A673 (cell line): ENCODE measurements at regions of chr5 and their contacts with region 1.

Region 1: DNA sequence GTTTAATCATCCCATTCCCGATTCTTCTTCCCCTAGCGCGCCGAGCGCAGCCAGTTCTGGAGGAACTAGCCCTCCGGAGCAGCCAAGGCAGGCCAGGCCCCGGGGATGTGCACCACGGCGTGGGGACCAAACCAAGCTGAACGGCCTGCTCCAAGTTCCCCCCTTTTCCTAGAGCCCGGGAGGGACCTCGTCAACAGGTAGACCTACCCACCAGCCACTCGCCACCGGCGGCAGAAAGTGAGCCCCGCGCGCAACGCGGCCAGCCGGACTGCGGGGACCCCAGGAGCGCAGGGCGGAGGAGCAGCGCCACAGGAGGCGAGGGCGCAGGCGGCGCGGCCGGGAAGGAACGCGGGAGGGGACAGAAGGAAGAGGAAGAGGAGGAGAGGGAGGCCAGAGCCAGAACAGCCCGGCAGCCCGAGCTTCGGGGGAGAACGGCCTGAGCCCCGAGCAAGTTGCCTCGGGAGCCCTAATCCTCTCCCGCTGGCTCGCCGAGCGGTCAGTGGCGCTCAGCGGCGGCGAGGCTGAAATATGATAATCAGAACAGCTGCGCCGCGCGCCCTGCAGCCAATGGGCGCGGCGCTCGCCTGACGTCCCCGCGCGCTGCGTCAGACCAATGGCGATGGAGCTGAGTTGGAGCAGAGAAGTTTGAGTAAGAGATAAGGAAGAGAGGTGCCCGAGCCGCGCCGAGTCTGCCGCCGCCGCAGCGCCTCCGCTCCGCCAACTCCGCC is at the start of gene ISL1:
- DNase-seq: peak; percentile 97
- H3K4me3 ChIP-seq: peak within 1 kb of the TSS; percentile 87
- H3K27ac ChIP-seq: peak within 1 kb of the TSS; percentile 91
- H3K4me1 ChIP-seq: peaks cover 7% of the 10 kb centered on the region
- H3K27me3 ChIP-seq: no peaks in the 10 kb centered on the region
- CTCF ChIP-seq: no peak
- total RNA-seq, gene ISL1: 11.1 and 11.8 TPM in 2 replicates

Region 2: DNA sequence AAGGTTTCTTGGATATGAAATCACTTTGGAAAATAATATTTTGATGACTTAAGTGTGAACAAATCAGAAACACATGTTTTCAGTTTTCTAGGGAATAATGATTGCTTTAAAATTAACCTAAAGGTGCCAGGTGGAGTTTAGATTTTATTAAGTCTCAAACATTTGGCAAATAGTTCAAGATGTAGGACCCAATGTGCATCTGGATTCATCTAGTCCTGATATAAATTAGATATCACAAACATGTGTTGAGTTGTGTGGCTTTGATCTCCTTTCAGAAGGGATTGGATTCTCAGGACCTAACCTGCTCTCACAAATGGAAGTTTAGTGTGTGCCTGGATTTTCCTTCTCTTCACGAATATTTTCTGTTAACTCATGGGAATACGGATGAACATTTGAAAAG is 291.1 kb before region 1 on chr5:
- CTCF ChIA-PET with region 1: no interaction called
- POLR2A ChIA-PET with region 1: no interaction called
- intact Hi-C with region 1: no loop called
- DNase-seq: no peak
- H3K4me3 ChIP-seq: no peak overlapping the region
- H3K27ac ChIP-seq: no peak overlapping the region
- H3K4me1 ChIP-seq: peaks cover 5% of the 10 kb centered on the region
- H3K27me3 ChIP-seq: no peaks in the 10 kb centered on the region
- CTCF ChIP-seq: no peak

Region 3: DNA sequence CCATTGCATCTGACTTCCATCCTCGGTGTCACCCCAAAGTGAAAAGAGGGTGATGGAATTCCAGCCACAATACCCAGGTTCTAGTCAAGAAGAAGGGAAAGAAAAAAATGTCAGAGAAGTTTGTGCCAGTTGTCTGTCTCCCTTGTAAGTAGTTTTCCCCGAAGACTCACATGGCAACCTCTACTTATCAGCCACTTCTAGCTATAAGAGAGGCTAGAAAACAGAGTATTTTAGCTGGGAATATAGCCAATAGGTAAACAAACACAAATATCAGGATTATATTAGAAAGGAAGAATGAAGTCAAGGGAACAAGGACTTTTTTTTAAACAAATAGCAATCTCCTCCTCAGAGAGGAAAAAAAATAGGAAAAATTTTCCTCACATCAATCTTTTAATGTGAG is 11.9 kb before region 1 on chr5:
- CTCF ChIA-PET with region 1: no interaction called
- POLR2A ChIA-PET with region 1: interaction called, 15 read pairs
- intact Hi-C with region 1: no loop called
- DNase-seq: no peak
- H3K4me3 ChIP-seq: no peak overlapping the region
- H3K27ac ChIP-seq: no peak overlapping the region
- H3K4me1 ChIP-seq: peaks cover 8% of the 10 kb centered on the region
- H3K27me3 ChIP-seq: no peaks in the 10 kb centered on the region
- CTCF ChIP-seq: no peak

Region 4: GRCh38 chr5:51960617-51961115 is 577.7 kb after region 1 on chr5:
- CTCF ChIA-PET with region 1: no interaction called
- POLR2A ChIA-PET with region 1: no interaction called
- intact Hi-C with region 1: loop called (anchors 2 kb)
- DNase-seq: peak; percentile 51
- H3K4me3 ChIP-seq: no peak overlapping the region
- H3K27ac ChIP-seq: no peak overlapping the region
- H3K4me1 ChIP-seq: peaks cover 8% of the 10 kb centered on the region
- H3K27me3 ChIP-seq: no peaks in the 10 kb centered on the region
- CTCF ChIP-seq: peak; percentile 67

Region 5: DNA sequence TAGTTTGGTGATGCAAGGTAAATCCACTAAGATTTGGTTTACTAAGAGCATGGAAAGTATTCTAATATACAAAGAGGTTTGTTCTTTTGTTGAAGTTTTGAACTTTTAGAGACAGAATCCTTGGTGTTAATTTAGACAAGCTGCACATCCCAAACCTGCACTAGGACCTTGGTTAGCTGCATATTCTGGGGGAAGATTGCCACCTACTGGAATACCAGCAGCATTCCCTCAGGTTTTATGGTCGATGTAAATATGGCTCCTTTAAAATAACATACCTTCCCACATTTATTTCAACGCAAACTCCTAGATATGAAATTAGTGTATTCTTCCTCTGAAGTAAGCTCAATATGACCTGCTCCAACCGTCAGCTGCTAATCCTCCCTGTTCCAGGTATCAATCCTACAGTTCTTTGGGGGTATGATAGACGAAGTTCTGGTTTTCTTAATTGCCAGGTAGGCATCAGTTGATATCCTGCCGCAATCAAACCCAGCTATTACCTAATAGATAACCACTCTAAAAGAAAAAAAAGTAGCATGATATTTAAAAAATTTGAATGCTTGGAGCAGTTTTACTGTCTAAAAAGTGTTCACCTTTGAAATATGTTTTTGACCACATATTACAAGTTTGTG is 624.4 kb after region 1 on chr5:
- CTCF ChIA-PET with region 1: no interaction called
- POLR2A ChIA-PET with region 1: no interaction called
- intact Hi-C with region 1: loop called (anchors 5 kb)
- DNase-seq: peak; percentile 72
- H3K4me3 ChIP-seq: no peak overlapping the region
- H3K27ac ChIP-seq: no peak overlapping the region
- H3K4me1 ChIP-seq: no peaks in the 10 kb centered on the region
- H3K27me3 ChIP-seq: no peaks in the 10 kb centered on the region
- CTCF ChIP-seq: peak; percentile 84

Region 6: GRCh38 chr5:52356311-52356918 is 973.5 kb after region 1 on chr5:
- CTCF ChIA-PET with region 1: no interaction called
- POLR2A ChIA-PET with region 1: no interaction called
- intact Hi-C with region 1: loop called (anchors 2 kb)
- DNase-seq: peak; percentile 73
- H3K4me3 ChIP-seq: no peak overlapping the region
- H3K27ac ChIP-seq: peak overlapping the region; percentile 43
- H3K4me1 ChIP-seq: peaks cover 17% of the 10 kb centered on the region
- H3K27me3 ChIP-seq: no peaks in the 10 kb centered on the region
- CTCF ChIP-seq: peak; percentile 85

Region 7: DNA sequence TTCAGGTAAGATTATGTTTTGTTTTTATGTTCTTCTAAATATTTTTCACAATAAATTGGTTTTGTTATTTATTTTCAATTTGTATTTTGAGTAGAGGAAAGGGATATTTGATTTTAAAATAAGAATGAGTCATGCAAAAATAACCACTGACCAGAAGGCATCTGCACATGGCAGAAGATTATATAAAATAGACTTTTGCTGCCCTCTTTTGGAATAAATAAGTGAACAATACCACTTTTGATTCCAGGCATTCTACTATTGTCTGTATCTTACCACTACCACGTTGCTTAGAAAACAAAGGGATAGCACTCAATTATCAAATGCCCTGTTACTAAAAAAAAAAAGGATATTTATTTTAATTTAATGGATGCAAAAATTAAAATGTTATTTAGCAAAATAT is 1177.4 kb after region 1 on chr5:
- CTCF ChIA-PET with region 1: no interaction called
- POLR2A ChIA-PET with region 1: no interaction called
- intact Hi-C with region 1: loop called (anchors 5 kb)
- DNase-seq: peak; percentile 80
- H3K4me3 ChIP-seq: no peak overlapping the region
- H3K27ac ChIP-seq: no peak overlapping the region
- H3K4me1 ChIP-seq: peaks cover 26% of the 10 kb centered on the region
- H3K27me3 ChIP-seq: no peaks in the 10 kb centered on the region
- CTCF ChIP-seq: peak; percentile 50

Region 8: DNA sequence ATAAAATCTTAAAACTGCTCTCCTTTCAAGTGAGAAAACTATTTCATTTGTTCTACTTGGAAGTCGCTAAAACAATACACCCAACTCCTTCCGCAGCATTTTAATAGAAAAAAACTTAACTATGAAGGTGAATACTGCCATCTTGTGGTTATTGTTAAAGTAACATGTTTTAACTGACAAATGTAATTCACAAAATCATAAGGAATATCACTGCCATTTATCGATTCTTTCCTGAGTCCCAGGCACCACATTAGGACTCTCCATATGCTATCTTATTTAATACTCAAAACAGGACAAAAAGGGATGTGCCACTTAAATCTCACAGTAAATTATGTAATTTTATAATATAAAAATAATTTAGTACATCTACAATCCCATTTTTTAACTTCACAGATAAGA is 1274.3 kb after region 1 on chr5:
- CTCF ChIA-PET with region 1: no interaction called
- POLR2A ChIA-PET with region 1: no interaction called
- intact Hi-C with region 1: loop called (anchors 10 kb)
- DNase-seq: peak; percentile 77
- H3K4me3 ChIP-seq: peak overlapping the region; percentile 8
- H3K27ac ChIP-seq: peak overlapping the region; percentile 37
- H3K4me1 ChIP-seq: peaks cover 13% of the 10 kb centered on the region
- H3K27me3 ChIP-seq: no peaks in the 10 kb centered on the region
- CTCF ChIP-seq: peak; percentile 58